GM10248 (cell line): ENCODE measurements at regions of chr10 and their contacts with region 1.

Region 1: GRCh38 chr10:91185239-91185875 is 35.1 kb upstream of the PCGF5 start:
- DNase-seq: no peak
- CTCF ChIP-seq: no peak

Region 2: DNA sequence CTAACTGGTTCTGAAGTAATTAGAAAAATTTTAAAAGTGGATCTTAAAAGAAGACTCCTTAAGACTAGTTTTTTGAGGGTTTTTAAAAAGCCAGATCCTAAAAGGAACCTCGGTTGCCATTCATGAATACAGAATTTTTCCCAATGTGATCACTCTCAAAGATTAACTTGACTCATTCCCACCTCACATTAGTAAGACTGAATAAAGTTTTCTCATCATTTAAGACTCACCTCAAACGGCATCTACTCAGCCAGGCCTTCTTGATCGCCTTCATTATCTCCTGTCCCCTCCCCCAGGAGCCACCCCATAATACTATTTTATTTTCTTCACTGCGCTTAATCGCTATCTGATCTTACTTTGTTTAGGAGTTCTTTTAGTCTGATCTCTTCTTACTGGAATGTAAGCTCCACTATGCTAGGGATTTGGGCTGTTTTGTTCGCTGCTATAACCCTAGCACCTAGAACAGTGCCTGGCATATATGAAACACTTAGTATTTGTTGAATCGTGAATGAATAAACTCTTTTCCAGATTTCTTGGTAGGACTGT is 20.8 kb before region 1 on chr10:
- CTCF ChIA-PET with region 1: interaction called, 12 read pairs
- POLR2A ChIA-PET with region 1: no interaction called
- DNase-seq: no peak
- CTCF ChIP-seq: no peak

Region 3: GRCh38 chr10:91172348-91172747 is 13.0 kb before region 1 on chr10:
- CTCF ChIA-PET with region 1: interaction called, 20 read pairs
- POLR2A ChIA-PET with region 1: no interaction called
- DNase-seq: no peak
- CTCF ChIP-seq: no peak